Heart left ventricle (tissue), 16 donors: ENCODE measurements at regions of chr7 and their contacts with region 1.

Region 1: GRCh38 chr7:32942786-32943653 is 14.2 kb upstream of the FKBP9 start:
- DNase-seq: peak; percentile 83 to 90 (median 87)
- ATAC-seq: peak; percentile 70 to 98 (median 94)
- H3K4me3 ChIP-seq: peak overlapping the region; percentile 61 to 95 (median 83)
- H3K27ac ChIP-seq: peak overlapping the region; percentile 84 to 99 (median 97)
- H3K4me1 ChIP-seq: peaks cover 0 to 37% (median 16%) of the 10 kb centered on the region in 12 donors
- H3K27me3 ChIP-seq: no peaks in the 10 kb centered on the region
- CTCF ChIP-seq: peak; percentile 48 to 83 (median 74)
- POLR2A ChIP-seq: peak in 1 of 2 donors; percentile 25

Region 2: DNA sequence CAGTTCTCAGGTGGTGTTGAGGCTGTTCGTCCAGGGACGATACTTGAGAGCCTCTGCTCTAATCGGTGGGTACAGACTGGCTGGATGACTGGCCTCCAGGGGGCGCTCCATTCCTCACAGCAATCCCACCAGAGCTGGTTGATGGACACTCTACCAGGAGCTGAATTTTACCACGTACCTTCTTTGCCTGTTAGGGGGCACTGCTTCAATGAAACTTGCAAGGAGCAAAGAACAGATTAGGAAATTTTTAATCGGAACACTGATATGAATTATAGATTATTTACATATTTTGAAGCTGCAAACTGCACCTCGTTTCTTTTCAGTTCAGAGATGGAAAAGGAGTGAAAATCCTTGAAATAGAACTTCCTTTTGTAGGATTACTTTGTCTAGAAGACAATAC is 96.3 kb before region 1 on chr7:
- intact Hi-C with region 1: loop called in 9 of 10 experiments (anchors 1 to 10 kb)
- DNase-seq: peak; percentile 79 to 93 (median 90)
- ATAC-seq: peak; percentile 90 to 100 (median 100)
- H3K4me3 ChIP-seq: peak overlapping the region in 2 of 12 donors; percentile 6 to 25
- H3K27ac ChIP-seq: no peak overlapping the region
- H3K4me1 ChIP-seq: peaks cover 0 to 8% (median 3%) of the 10 kb centered on the region in 12 donors
- H3K27me3 ChIP-seq: no peaks in the 10 kb centered on the region
- CTCF ChIP-seq: peak; percentile 73 to 98 (median 94)
- POLR2A ChIP-seq: no peak

Region 3: DNA sequence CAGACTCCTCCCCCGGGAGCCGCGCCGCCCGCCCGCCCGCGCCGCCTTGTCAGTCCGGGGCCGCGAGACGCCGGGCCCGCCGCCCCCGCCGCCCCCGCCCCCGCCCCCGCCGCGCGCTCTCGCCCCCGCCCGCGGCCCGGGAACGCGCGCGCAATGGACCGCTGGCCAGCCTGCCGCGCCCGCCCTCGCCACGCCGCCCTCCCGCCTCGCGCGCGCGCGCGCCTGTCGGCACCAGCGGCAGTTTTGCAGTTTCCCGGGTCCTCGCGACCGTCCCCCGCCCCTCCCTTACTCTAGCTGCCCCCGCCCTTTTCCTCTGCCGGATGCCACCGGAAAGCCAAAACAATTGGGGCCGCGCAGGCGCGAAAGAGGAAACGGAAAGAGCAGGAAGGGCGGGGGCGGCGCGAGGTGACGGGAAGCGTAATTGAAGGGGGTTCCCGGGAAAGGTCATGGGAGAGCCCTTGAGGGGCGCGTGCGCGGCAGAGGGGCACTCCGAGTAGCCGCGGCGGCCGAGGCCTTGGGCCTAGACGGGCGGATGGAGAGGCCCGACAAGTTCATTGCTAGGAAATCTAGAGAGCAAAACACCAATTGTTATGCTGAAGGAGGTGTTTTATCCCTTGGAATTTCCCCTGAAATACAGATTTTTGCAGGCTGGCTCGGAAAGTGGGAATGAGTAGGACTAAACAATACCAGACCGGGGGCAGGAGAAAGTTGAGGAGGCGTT is 51.1 kb before region 1 on chr7:
- intact Hi-C with region 1: loop called in 9 of 10 experiments (anchors 2 to 10 kb)
- DNase-seq: peak; percentile 99
- ATAC-seq: peak; percentile 88 to 93 (median 91)
- H3K4me3 ChIP-seq: peak overlapping the region; percentile 64 to 98 (median 80)
- H3K27ac ChIP-seq: peak overlapping the region; percentile 93 to 100 (median 98)
- H3K4me1 ChIP-seq: peaks cover 10 to 50% (median 45%) of the 10 kb centered on the region in 12 donors
- H3K27me3 ChIP-seq: no peaks in the 10 kb centered on the region
- CTCF ChIP-seq: no peak
- POLR2A ChIP-seq: peak in 1 of 2 donors; percentile 70

Region 4: GRCh38 chr7:33040803-33041516 is 97.9 kb after region 1 on chr7:
- intact Hi-C with region 1: loop called in 1 of 10 experiments (anchors 10 kb)
- DNase-seq: peak in 2 of 5 donors; percentile 19 to 37
- ATAC-seq: peak; percentile 68 to 84 (median 82)
- H3K4me3 ChIP-seq: peak overlapping the region in 10 of 12 donors; percentile 6 to 60 (median 52)
- H3K27ac ChIP-seq: peak overlapping the region in 11 of 12 donors; percentile 4 to 83 (median 67)
- H3K4me1 ChIP-seq: peaks cover 0 to 67% (median 52%) of the 10 kb centered on the region in 12 donors
- H3K27me3 ChIP-seq: no peaks in the 10 kb centered on the region
- CTCF ChIP-seq: no peak
- POLR2A ChIP-seq: no peak

Region 5: GRCh38 chr7:33109005-33109757 is 166.2 kb after region 1 on chr7 and contains the start of gene RP9:
- intact Hi-C with region 1: loop called in 2 of 10 experiments (anchors 5 kb)
- DNase-seq: peak; percentile 60 to 88 (median 74)
- ATAC-seq: peak; percentile 28 to 93 (median 80)
- H3K4me3 ChIP-seq: peak within 1 kb of the TSS; percentile 70 to 97 (median 94)
- H3K27ac ChIP-seq: peak within 1 kb of the TSS; percentile 16 to 91 (median 85)
- H3K4me1 ChIP-seq: peaks cover 16 to 47% (median 33%) of the 10 kb centered on the region in 12 donors
- H3K27me3 ChIP-seq: no peaks in the 10 kb centered on the region
- CTCF ChIP-seq: peak; percentile 21 to 87 (median 62)
- POLR2A ChIP-seq: peak in 1 of 2 donors; percentile 6
- total RNA-seq, gene RP9: 12.4 to 25.9 (median 18.0) TPM